ENCODE measurements at regions of chr1 and their contacts with region 1.

Region 1: GRCh38 chr1:52937433-52938182 is 10.5 kb downstream of the SCP2 start:
- DNase-seq: no peak
- H3K4me3 ChIP-seq: no peak overlapping the region
- H3K27ac ChIP-seq: no peak overlapping the region
- H3K4me1 ChIP-seq: no peaks in the 10 kb centered on the region
- H3K27me3 ChIP-seq: no peaks in the 10 kb centered on the region
- CTCF ChIP-seq: no peak

Region 2: DNA sequence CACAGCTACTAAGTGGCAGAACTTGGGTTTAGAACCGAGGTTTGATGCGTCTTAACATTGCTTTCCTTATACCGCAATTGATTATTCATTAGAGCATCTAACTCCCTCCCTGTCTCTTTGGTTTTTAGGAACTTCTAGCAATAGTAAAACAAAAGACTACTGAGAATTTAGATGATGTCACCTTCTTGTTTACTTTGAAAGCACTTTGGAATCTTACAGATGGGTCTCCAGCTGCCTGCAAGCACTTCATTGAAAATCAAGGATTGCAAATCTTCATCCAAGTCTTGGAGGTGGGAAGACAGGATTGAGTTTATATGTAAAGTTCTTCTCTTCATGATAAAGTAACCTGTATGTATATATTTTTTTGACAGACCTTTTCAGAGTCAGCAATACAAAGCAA is 60.1 kb before region 1 on chr1:
- CTCF ChIA-PET with region 1: interaction called, 20 read pairs
- POLR2A ChIA-PET with region 1: no interaction called
- intact Hi-C with region 1: no loop called
- DNase-seq: no peak
- H3K4me3 ChIP-seq: no peak overlapping the region
- H3K27ac ChIP-seq: no peak overlapping the region
- H3K4me1 ChIP-seq: no peaks in the 10 kb centered on the region
- H3K27me3 ChIP-seq: no peaks in the 10 kb centered on the region
- CTCF ChIP-seq: no peak